ENCODE measurements at regions of chr10 and their contacts with region 1.

Region 1: GRCh38 chr10:101067356-101068083 is 5.7 kb downstream of the KAZALD1 start:
- DNase-seq: peak; percentile 68
- H3K4me3 Mint-ChIP-seq: peak overlapping the region; percentile 82
- H3K27ac Mint-ChIP-seq: no peak overlapping the region
- H3K4me1 Mint-ChIP-seq: peaks cover 7% of the 10 kb centered on the region
- H3K27me3 Mint-ChIP-seq: peaks cover 45% of the 10 kb centered on the region

Region 2: GRCh38 chr10:101018600-101019439 is 48.7 kb before region 1 on chr10:
- intact Hi-C with region 1: loop called (anchors 1 kb)
- DNase-seq: peak; percentile 71
- H3K4me3 Mint-ChIP-seq: no peak overlapping the region
- H3K27ac Mint-ChIP-seq: no peak overlapping the region
- H3K4me1 Mint-ChIP-seq: peaks cover 17% of the 10 kb centered on the region
- H3K27me3 Mint-ChIP-seq: peaks cover 34% of the 10 kb centered on the region

Region 3: GRCh38 chr10:101042667-101043355 is 24.7 kb before region 1 on chr10:
- intact Hi-C with region 1: loop called (anchors 1 kb)
- DNase-seq: peak; percentile 85
- H3K4me3 Mint-ChIP-seq: peak overlapping the region; percentile 91
- H3K27ac Mint-ChIP-seq: peak overlapping the region; percentile 84
- H3K4me1 Mint-ChIP-seq: peaks cover 27% of the 10 kb centered on the region
- H3K27me3 Mint-ChIP-seq: peaks cover 20% of the 10 kb centered on the region

Region 4: GRCh38 chr10:101050208-101051069 is 17.1 kb before region 1 on chr10:
- intact Hi-C with region 1: loop called (anchors 1 kb)
- DNase-seq: peak; percentile 76
- H3K4me3 Mint-ChIP-seq: peak overlapping the region; percentile 54
- H3K27ac Mint-ChIP-seq: no peak overlapping the region
- H3K4me1 Mint-ChIP-seq: peaks cover 13% of the 10 kb centered on the region
- H3K27me3 Mint-ChIP-seq: peaks cover 46% of the 10 kb centered on the region

Measured in activated T-helper 1 cell treated with anti-CD3 and anti-CD28 coated beads, Interleukin-12 subunit alpha, Interleukin-12 subunit beta, Interleukin-2, Interleukin-4 antibody, amounts not matched to agents 30 ng/mL and 10 ng/mL and 1 ng/mL, durations not matched to agents 14 hours and 24 hours and 36 hours (primary cell).